ENCODE measurements at regions of chr1 and their contacts with region 1.

Region 1: GRCh38 chr1:201792534-201793305 is 36.2 kb upstream of the IPO9 start:
- DNase-seq: no peak
- ATAC-seq: peak; percentile 80

Region 2: GRCh38 chr1:201126832-201127754 is 665.6 kb before region 1 on chr1 and contains the start of gene ASCL5:
- intact Hi-C with region 1: no loop called
- DNase-seq: peak; percentile 66
- ATAC-seq: no peak
- total RNA-seq, gene ASCL5: not detected

Region 3: GRCh38 chr1:201530741-201531531 is 261.8 kb before region 1 on chr1:
- intact Hi-C with region 1: loop called (anchors 2 kb)
- DNase-seq: peak; percentile 89
- ATAC-seq: peak; percentile 88

Region 4: GRCh38 chr1:201559679-201560162 is 233.0 kb before region 1 on chr1:
- intact Hi-C with region 1: loop called (anchors 1 kb)
- DNase-seq: peak; percentile 91
- ATAC-seq: peak; percentile 84

Region 5: DNA sequence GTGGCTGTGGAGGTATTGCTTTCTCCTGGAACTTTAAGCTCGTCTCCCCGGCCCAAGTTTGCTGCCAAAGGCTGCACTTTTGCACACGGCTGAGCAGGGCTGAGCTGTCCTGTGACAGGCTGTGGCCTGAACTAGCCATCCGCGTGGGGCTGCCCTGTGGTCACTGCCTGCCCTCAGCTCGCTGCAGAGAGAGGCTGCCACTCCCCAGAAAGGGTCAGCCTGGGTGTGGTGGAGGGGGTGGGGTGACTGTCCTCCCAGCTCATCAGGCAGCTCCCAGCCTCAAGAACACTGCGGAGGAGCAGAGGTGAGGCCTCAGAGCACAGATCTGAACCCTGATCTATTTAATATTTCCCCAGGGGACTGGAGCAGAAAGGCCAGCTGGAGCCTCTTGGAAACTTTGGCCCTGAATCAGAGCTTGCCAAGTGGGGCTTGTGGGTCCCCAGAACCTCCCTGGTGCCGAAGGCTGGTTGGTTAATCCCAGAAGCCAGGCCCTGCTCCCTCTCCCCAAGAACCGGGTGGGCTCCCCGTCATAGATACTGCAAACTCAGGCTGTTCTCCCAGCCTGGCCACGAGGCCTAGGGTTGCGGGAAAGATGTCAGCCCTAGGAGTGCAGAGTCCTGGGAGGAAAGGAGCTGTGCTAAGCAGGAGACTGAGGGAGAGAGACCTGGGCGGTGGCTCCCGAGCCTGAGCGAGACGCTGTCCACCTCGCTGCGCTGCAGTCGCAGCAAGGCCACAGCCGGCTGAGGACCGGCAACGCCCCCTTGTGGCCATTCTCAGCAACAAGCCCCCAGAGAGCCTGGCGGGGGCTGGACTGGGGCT is 88.9 kb before region 1 on chr1:
- intact Hi-C with region 1: loop called (anchors 1 kb)
- DNase-seq: peak; percentile 92
- ATAC-seq: peak; percentile 87

Region 6: DNA sequence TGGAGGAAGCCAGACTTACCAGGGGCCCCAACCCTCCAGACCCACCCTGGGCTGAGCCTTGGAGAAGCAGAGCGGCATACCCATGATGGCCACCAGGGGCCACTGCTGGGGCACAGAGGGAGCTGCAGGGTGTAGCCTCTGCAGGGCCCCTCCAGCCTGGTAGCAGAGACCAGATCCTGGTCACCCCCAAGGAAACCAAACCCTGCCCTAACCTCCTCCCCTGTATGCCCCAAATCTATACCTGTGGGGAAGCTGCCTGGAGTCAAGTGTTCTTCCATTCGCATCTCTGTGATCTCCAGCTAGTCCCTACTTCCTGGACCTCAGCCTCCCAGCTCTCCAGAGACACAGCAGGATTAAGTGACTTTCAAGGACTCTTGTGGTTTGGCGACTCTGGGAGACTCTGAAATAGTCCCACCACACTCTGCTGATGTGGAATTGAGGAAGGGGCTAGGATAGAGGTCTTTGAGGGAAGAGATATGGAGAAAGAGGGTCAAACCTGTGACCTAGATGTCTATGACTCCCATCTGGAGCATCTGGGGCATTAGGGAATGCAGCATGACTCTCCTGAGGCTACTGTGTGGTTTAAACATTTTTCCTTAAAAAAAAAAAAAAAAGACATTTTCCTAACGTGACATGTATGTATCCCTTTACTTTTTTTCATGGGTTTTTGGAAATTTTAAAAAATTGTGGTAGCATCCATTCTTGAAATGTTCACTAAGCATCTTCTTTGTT is 83.0 kb before region 1 on chr1:
- intact Hi-C with region 1: loop called (anchors 1 kb)
- DNase-seq: peak; percentile 87
- ATAC-seq: peak; percentile 51

Region 7: DNA sequence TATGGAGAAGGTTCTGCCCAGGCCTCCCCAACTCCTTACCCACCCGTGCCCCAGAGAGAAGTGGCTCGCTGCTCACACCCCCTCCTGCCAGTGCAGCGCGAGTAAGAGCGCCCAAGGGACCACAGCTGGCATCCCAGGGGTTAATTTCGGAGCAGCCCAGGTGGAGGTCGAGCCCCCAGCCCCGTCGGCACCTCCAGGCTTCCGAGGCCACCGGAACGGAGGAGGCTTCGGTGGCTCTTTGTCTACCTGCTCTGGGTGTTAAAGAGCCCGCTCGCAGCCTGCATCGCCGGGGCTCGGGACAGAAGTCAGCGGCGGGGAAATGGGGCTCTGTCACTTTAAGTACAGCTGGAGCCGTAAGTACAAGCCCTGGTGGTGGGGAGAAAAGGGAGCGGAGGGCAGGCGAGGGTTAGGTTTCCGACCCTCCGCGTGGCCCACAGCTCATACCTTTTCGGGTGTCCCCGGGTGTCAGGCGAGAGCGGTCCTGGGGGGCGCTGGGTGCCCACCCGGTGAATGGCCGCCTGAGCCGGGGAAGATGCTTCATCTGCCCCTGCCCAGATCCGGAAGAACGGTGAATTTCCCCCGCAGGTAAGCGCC is 53.1 kb before region 1 on chr1:
- intact Hi-C with region 1: loop called (anchors 2 kb)
- DNase-seq: peak; percentile 83
- ATAC-seq: peak; percentile 54

Region 8: DNA sequence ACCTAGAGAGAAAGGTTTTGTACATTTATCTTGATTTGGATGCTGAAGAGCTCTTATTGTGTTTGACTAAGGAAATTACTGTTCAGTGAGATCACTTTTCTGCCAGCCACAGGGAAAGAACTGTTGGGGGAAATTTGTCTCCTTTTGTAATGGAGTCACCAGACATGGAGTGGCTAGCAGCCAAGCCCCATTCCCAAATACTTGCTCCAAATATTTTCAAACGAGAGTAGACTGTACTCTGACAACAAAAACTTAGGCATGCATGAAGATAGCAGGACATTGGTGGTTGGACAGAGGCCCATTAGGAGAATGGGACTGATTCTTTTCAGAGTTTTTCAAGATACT is 57.3 kb after region 1 on chr1:
- intact Hi-C with region 1: no loop called
- DNase-seq: peak; percentile 50
- ATAC-seq: peak; percentile 50

Region 9: GRCh38 chr1:202009326-202010179 is 216.8 kb after region 1 on chr1:
- intact Hi-C with region 1: no loop called
- DNase-seq: no peak
- ATAC-seq: peak; percentile 73

Measured in Right ventricle myocardium inferior (tissue), 1 donor.